ENCODE measurements at regions of chr3 and their contacts with region 1.

Region 1: DNA sequence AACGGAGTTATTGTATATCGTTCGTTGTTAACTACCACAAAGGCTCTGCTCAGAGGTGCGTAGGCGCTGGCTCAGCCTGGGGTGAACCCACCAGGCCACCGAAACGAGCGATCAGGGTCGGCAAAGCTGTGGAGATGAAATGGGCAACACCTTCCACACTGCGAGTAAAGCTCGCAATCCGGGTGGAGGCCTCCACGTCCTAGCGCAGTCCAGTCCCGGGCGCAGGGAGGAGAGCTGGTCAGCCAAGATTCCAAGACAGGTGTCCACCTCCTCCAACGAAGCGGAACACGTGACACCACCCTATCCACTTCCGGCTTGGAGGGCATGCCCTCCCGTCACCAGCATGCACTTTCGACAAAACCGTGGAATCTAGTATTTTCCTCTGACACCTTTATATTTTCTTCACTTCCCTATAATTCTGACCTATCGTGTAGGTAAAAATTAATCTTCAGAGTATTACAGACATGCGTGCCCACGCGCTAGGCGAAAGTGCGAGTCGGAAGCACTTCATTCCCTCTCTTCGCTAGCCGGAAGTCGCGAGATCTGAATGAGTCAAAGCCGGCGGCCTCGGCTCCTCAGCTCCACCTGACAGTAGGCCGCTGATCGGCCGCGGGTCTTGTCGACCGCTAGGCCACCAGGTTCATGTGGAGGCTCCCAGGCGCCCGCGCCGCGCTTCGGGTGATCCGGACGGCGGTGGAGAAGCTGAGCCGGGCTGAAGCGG is at the start of gene PDE12:
- DNase-seq: peak; percentile 82 to 86
- H3K4me3 ChIP-seq: peak within 1 kb of the TSS; percentile 74
- H3K27ac ChIP-seq: peak within 1 kb of the TSS; percentile 92
- H3K4me1 ChIP-seq: peaks cover 12% of the 10 kb centered on the region; the same call in 1 of the 2 replicates
- H3K27me3 ChIP-seq: no peaks in the 10 kb centered on the region
- CTCF ChIP-seq: no peak
- total RNA-seq, gene PDE12: 14.3 and 16.6 TPM in 2 replicates

Region 2: GRCh38 chr3:57397175-57398026 is 158.5 kb before region 1 on chr3:
- CTCF ChIA-PET with region 1: interaction called, 4 read pairs
- POLR2A ChIA-PET with region 1: no interaction called
- intact Hi-C with region 1: loop called (anchors 1 kb)
- DNase-seq: peak; percentile 58 to 61
- H3K4me3 ChIP-seq: no peak overlapping the region
- H3K27ac ChIP-seq: no peak overlapping the region
- H3K4me1 ChIP-seq: no peaks in the 10 kb centered on the region
- H3K27me3 ChIP-seq: no peaks in the 10 kb centered on the region
- CTCF ChIP-seq: peak; percentile 86

Region 3: GRCh38 chr3:57434041-57434440 is 121.9 kb before region 1 on chr3:
- CTCF ChIA-PET with region 1: interaction called, 3 read pairs
- POLR2A ChIA-PET with region 1: no interaction called
- intact Hi-C with region 1: loop called (anchors 5 kb)
- DNase-seq: peak; percentile 6 to 40
- H3K4me3 ChIP-seq: no peak overlapping the region
- H3K27ac ChIP-seq: no peak overlapping the region
- H3K4me1 ChIP-seq: no peaks in the 10 kb centered on the region
- H3K27me3 ChIP-seq: no peaks in the 10 kb centered on the region
- CTCF ChIP-seq: peak; percentile 71

Region 4: GRCh38 chr3:57597122-57597923 is 41.4 kb after region 1 on chr3 and contains the start of gene ARF4:
- CTCF ChIA-PET with region 1: no interaction called
- POLR2A ChIA-PET with region 1: interaction called, 8 read pairs
- intact Hi-C with region 1: loop called (anchors 1 kb)
- DNase-seq: peak; percentile 97 to 99
- H3K4me3 ChIP-seq: peak within 1 kb of the TSS; percentile 80
- H3K27ac ChIP-seq: peak within 1 kb of the TSS; percentile 97
- H3K4me1 ChIP-seq: peaks cover 36% of the 10 kb centered on the region
- H3K27me3 ChIP-seq: no peaks in the 10 kb centered on the region
- CTCF ChIP-seq: no peak; the same call in 1 of the 2 replicates
- total RNA-seq, gene ARF4: 132 and 182 TPM in 2 replicates